PC-9 (cell line): ENCODE measurements at regions of chr11 and their contacts with region 1.

Region 1: DNA sequence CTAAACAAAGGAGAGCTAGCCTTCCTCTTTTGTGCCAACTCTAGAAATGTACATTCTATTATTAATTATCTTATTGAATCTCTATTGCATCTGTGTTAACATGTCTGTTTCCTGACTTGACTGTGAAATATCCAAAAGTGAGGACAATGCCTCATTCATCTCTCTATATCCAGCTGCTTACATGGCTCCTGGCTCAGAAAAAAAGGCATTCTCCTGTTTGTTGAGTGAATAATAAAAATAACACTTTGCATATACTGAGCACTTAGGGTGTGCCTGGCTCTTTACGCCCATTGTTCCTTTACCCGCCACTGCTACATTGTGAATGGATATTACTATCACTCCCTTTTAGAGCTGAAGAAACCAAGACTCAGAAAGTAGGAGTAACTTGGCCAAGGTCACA is 19.9 kb downstream of the NRXN2 start:
- DNase-seq: no peak
- H3K4me3 ChIP-seq: no peak overlapping the region
- H3K27ac ChIP-seq: no peak overlapping the region
- H3K4me1 ChIP-seq: no peaks in the 10 kb centered on the region
- H3K27me3 ChIP-seq: peaks cover 54% of the 10 kb centered on the region
- CTCF ChIP-seq: no peak

Region 2: DNA sequence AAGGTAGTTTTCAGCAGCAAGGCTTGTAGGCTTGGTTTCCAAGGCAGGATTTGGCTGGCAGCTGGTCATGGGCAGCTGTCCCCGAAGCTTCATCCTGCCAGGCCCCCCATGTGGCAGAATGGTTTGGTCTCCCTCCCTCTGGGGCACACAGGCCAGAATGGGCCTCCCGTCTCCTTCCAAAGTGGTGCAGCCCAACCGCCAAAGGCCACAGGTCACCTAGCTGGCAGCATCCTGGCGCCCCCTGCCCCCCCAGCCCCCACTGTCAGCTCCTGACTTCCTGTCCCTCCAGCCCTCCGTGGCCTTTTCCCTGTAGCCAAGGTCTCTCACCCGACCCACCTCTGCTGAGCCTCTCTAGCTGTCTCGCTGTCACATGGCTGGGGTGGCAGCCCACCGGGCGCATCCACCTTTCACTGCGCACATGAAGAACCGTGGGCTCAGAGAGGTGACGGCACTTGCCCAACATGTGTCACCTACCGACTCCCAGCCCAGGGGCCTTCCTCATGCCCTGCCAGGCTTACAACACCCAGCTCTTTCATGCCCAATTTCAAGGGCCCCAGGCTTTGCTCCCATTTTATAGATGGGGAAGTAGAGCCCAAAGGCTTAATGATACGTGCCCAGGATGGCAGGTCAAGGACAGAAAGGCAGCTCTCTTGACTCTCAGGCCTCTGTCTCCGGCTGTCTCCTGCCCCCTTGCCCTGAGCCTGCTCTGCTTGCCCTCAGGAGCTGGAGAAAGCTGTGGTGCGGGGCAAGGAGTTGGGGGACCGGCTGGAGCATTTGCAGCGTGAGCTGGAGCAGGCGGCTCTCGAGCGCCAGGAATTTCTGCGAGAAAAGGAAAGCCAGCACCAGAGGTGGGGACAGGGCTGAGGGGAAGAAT is 354.2 kb before region 1 on chr11:
- CTCF ChIA-PET with region 1: interaction called, 16 read pairs
- POLR2A ChIA-PET with region 1: no interaction called
- intact Hi-C with region 1: no loop called
- DNase-seq: no peak
- H3K4me3 ChIP-seq: no peak overlapping the region
- H3K27ac ChIP-seq: no peak overlapping the region
- H3K4me1 ChIP-seq: peaks cover 19% of the 10 kb centered on the region
- H3K27me3 ChIP-seq: no peaks in the 10 kb centered on the region
- CTCF ChIP-seq: no peak